ENCODE measurements at regions of chr10 and their contacts with region 1.

Region 1: GRCh38 chr10:31353574-31353973 is 34.6 kb downstream of the ZEB1 start:
- DNase-seq: peak; percentile 49
- H3K4me3 Mint-ChIP-seq: no peak overlapping the region
- H3K27ac Mint-ChIP-seq: peak overlapping the region; percentile 47
- H3K4me1 Mint-ChIP-seq: peaks cover 38% of the 10 kb centered on the region
- H3K27me3 Mint-ChIP-seq: no peaks in the 10 kb centered on the region
- CTCF ChIP-seq: no peak

Region 2: DNA sequence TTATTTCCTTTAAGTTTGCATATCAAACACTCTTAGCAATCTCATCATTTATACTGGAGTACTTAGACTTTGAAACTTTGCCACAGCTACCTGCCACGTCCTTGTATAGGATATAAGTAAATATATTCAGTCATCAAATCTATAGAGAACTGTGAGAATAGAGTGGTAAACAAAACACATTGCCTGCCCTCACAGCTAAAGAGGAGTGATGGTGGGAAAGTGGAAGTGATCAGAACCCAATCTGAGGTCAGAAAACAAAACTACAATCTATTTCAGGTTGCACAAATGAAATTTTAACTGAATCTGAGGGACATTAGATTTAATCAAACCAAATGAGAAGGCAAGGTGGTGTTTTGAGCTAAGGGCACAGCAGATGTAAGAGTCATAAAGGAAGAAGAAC is 40.3 kb after region 1 on chr10:
- CTCF ChIA-PET with region 1: no interaction called
- intact Hi-C with region 1: no loop called
- DNase-seq: no peak
- H3K4me3 Mint-ChIP-seq: no peak overlapping the region
- H3K27ac Mint-ChIP-seq: no peak overlapping the region
- H3K4me1 Mint-ChIP-seq: peaks cover 9% of the 10 kb centered on the region
- H3K27me3 Mint-ChIP-seq: no peaks in the 10 kb centered on the region
- CTCF ChIP-seq: no peak

Region 3: DNA sequence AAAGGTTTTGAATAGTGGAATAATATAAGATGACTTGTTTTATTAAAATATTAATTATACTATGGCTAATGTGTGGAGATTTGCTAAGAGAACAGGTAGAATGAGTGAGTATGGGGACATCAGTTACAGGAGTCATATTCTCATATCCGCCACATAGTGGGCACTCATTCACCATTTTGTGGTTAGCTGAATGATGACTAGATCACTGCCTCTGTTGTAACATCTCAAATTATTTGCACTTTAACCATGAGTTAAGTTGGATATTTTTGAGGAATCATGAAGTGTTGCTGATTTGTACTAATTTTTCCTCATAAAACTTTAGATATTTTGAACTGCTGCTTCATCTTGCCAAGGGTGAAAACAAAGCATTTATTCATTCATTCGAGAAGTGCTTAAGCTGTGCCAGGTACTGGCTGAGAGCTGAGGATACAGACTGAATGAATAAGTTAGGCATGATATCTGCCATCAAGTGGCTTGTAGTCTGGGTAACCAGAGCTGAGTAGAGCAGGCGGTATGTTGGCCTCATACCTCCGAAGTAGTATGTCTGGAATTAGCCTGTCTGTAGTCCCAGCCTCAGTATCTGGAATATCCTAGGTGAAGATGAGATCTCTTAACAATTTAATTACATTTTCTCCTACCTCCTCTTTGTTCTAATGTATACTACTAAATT is 66.0 kb after region 1 on chr10:
- CTCF ChIA-PET with region 1: no interaction called
- intact Hi-C with region 1: loop called (anchors 2 kb)
- DNase-seq: no peak
- H3K4me3 Mint-ChIP-seq: no peak overlapping the region
- H3K27ac Mint-ChIP-seq: no peak overlapping the region
- H3K4me1 Mint-ChIP-seq: no peaks in the 10 kb centered on the region
- H3K27me3 Mint-ChIP-seq: no peaks in the 10 kb centered on the region
- CTCF ChIP-seq: no peak

Region 4: GRCh38 chr10:31479752-31480151 is 126.2 kb after region 1 on chr10:
- CTCF ChIA-PET with region 1: no interaction called
- intact Hi-C with region 1: loop called (anchors 10 kb)
- DNase-seq: no peak
- H3K4me3 Mint-ChIP-seq: no peak overlapping the region
- H3K27ac Mint-ChIP-seq: no peak overlapping the region
- H3K4me1 Mint-ChIP-seq: peaks cover 9% of the 10 kb centered on the region
- H3K27me3 Mint-ChIP-seq: no peaks in the 10 kb centered on the region
- CTCF ChIP-seq: no peak

Measured in Calu3 (cell line).